GM12878 (cell line): ENCODE measurements at regions of chr4 and their contacts with region 1.

Region 1: DNA sequence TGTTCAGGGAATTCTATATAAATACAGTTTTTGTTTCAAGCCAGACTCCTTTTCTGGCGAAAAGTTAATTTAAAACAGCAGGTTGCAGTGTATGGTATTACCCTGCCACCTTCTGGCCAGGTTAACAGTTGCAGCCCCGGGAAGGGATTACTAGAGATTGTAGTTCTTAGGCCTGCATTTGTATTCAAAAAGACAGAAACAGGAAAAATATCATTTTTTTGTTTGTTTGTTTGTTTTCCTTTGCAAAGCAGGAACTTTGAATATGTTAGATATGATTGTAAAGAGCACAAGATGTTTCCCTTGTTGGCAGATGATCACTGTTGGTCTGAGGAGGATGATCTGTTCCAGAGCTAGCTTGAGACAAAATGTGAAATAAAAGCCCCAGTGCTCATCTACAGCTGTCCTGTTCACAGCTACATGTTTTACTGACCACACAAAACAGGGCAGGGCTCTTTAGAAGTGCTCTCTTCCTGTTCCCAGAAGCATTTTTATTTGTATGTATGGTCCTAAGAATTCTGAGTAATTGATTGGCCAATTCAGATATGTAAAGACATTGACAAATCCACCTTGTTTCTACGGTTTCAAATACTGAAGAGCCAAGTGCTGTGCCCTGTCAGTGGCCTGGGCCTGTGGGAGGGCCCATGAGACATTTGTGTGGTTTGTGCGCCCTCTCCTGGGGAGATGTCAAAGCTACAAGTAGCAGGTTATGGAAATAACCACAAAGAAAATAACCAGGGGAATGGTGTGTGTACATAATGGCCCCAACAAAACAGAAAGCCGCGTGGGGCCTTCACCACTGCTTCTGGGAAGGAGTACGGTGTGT is 57.9 kb downstream of the CLDN22 start:
- DNase-seq: peak; percentile 27
- ATAC-seq: peak; percentile 97
- H3K4me3 ChIP-seq: no peak overlapping the region
- H3K27ac ChIP-seq: no peak overlapping the region
- H3K4me1 ChIP-seq: no peaks in the 10 kb centered on the region
- H3K27me3 ChIP-seq: no peaks in the 10 kb centered on the region; a peak in 1 of 4 replicates
- CTCF ChIP-seq: peak; percentile 80 to 91 (median 87)
- EP300 ChIP-seq: no peak
- POLR2A ChIP-seq: no peak
- RAD21 ChIP-seq: peak; percentile 93

Region 2: GRCh38 chr4:182806259-182807252 is 455.6 kb before region 1 on chr4:
- CTCF ChIA-PET with region 1: no interaction called
- POLR2A ChIA-PET with region 1: no interaction called
- RAD21 ChIA-PET with region 1: no interaction called
- SMC1A ChIA-PET with region 1: interaction called, 3 read pairs
- in situ Hi-C with region 1: no loop called
- intact Hi-C with region 1: loop called (anchors 10 kb)
- DNase-seq: no peak
- ATAC-seq: peak; percentile 76
- H3K4me3 ChIP-seq: peak overlapping the region; percentile 59; the same call in 1 of the 2 replicates
- H3K27ac ChIP-seq: 0 out of 2 replicates have a peak overlapping the region, but pooled peaks have one; percentile 34
- H3K4me1 ChIP-seq: peaks cover 24% of the 10 kb centered on the region
- H3K27me3 ChIP-seq: no peaks in the 10 kb centered on the region
- CTCF ChIP-seq: peak; percentile 73 to 87 (median 84)
- EP300 ChIP-seq: no peak
- POLR2A ChIP-seq: no peak
- RAD21 ChIP-seq: peak; percentile 81

Region 3: GRCh38 chr4:183074296-183074990 is 187.7 kb before region 1 on chr4:
- CTCF ChIA-PET with region 1: interaction called, 42 read pairs
- POLR2A ChIA-PET with region 1: no interaction called
- RAD21 ChIA-PET with region 1: interaction called, 8 read pairs
- SMC1A ChIA-PET with region 1: interaction called, 23 read pairs
- in situ Hi-C with region 1: loop called (anchors 5 kb)
- intact Hi-C with region 1: loop called (anchors 1 kb)
- DNase-seq: no peak
- ATAC-seq: no peak
- H3K4me3 ChIP-seq: no peak overlapping the region
- H3K27ac ChIP-seq: no peak overlapping the region
- H3K4me1 ChIP-seq: no peaks in the 10 kb centered on the region
- H3K27me3 ChIP-seq: no peaks in the 10 kb centered on the region
- CTCF ChIP-seq: no peak
- EP300 ChIP-seq: no peak
- POLR2A ChIP-seq: no peak
- RAD21 ChIP-seq: no peak

Region 4: GRCh38 chr4:183249857-183250256 is 12.3 kb before region 1 on chr4:
- CTCF ChIA-PET with region 1: interaction called, 27 read pairs
- POLR2A ChIA-PET with region 1: no interaction called
- RAD21 ChIA-PET with region 1: interaction called, 5 read pairs
- SMC1A ChIA-PET with region 1: interaction called, 15 read pairs
- in situ Hi-C with region 1: no loop called
- intact Hi-C with region 1: no loop called
- DNase-seq: no peak
- ATAC-seq: peak; percentile 65
- H3K4me3 ChIP-seq: no peak overlapping the region
- H3K27ac ChIP-seq: no peak overlapping the region
- H3K4me1 ChIP-seq: no peaks in the 10 kb centered on the region
- H3K27me3 ChIP-seq: peaks cover 0 to 2% of the 10 kb centered on the region in 2 experiments; a peak in 1 of 4 replicates
- CTCF ChIP-seq: peak in 2 of 3 experiments; percentile 4 to 46; a peak in 2 of 6 replicates
- EP300 ChIP-seq: no peak
- POLR2A ChIP-seq: no peak
- RAD21 ChIP-seq: peak; percentile 55; the same call in 1 of the 2 replicates

Region 5: DNA sequence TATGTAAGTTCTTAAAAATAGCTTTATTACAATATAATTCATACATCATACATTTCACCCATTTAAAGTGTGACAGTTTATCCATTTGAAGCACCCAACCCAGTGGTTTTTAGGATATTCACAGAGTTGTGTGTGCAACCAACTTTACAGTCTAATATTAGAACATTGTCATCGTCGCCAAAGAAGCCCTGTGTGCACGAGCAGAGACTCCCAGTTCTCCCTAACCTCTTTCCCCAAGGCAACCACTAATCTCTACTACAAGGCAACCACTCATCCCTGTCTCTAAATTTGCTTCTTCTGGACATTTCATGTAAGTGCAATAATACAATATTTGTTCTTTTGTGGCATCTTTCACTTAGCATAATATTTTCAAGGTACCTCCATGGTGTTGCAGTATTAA is 10.2 kb after region 1 on chr4:
- CTCF ChIA-PET with region 1: interaction called, 13 read pairs
- POLR2A ChIA-PET with region 1: no interaction called
- RAD21 ChIA-PET with region 1: no interaction called
- SMC1A ChIA-PET with region 1: interaction called, 7 read pairs
- in situ Hi-C with region 1: no loop called
- intact Hi-C with region 1: no loop called
- DNase-seq: no peak
- ATAC-seq: no peak
- H3K4me3 ChIP-seq: no peak overlapping the region
- H3K27ac ChIP-seq: no peak overlapping the region
- H3K4me1 ChIP-seq: no peaks in the 10 kb centered on the region
- H3K27me3 ChIP-seq: no peaks in the 10 kb centered on the region
- CTCF ChIP-seq: no peak
- EP300 ChIP-seq: no peak
- POLR2A ChIP-seq: no peak
- RAD21 ChIP-seq: no peak

Region 6: DNA sequence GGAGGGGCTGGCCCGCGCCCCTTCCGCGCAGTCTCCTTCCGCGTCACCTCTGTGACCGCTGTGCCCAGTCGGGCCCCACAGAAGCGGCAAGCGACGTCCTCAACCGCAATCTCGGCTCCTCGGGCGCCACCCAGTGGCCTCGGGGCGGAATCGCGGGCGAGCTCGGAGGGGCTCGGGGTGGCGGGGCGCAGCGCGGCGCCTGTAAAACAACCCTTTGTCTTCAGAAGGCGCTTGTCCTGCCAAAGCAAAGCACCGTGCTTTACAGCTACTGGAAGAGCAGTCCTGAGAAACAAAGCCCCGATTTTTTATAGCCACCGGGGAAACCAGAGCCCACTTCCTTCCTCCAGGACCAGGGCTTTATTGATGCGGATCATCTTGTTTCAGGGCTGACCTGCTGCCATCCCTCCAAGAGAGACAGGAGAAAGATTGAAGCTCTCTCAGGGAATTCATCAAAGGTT is 145.0 kb after region 1 on chr4:
- CTCF ChIA-PET with region 1: interaction called, 9 read pairs
- POLR2A ChIA-PET with region 1: no interaction called
- RAD21 ChIA-PET with region 1: interaction called, 5 read pairs
- SMC1A ChIA-PET with region 1: interaction called, 4 read pairs
- in situ Hi-C with region 1: no loop called
- intact Hi-C with region 1: loop called (anchors 2 kb)
- DNase-seq: peak; percentile 19
- ATAC-seq: peak; percentile 98
- H3K4me3 ChIP-seq: peak overlapping the region; percentile 64
- H3K27ac ChIP-seq: no peak overlapping the region
- H3K4me1 ChIP-seq: no peaks in the 10 kb centered on the region
- H3K27me3 ChIP-seq: no peaks in the 10 kb centered on the region; a peak in 1 of 4 replicates
- CTCF ChIP-seq: peak; percentile 88 to 94 (median 89)
- EP300 ChIP-seq: no peak
- POLR2A ChIP-seq: no peak
- RAD21 ChIP-seq: peak; percentile 72

Region 7: DNA sequence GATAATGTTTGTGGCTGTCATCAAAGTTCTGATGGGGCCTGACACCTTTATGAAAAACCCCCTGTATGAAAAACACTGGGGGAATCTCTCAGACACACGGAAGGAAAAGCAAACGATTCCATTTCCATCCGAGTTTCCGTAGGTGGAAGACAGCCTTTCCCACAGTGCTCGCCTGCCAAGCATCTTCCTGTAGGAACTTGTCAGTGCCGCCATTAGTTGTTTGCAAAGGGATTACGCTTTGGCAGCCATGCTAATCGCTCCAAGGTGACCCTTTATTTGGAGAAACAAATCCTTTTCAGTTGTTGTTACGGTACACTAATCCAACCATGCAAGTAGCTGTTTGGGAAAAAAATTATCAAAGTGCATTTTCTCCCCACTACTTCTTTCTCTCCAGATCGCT is 598.6 kb after region 1 on chr4:
- CTCF ChIA-PET with region 1: no interaction called
- POLR2A ChIA-PET with region 1: no interaction called
- RAD21 ChIA-PET with region 1: no interaction called
- SMC1A ChIA-PET with region 1: no interaction called
- in situ Hi-C with region 1: no loop called
- intact Hi-C with region 1: no loop called
- DNase-seq: no peak
- ATAC-seq: no peak
- H3K4me3 ChIP-seq: no peak overlapping the region
- H3K27ac ChIP-seq: no peak overlapping the region
- H3K4me1 ChIP-seq: no peaks in the 10 kb centered on the region
- H3K27me3 ChIP-seq: peaks cover 2% of the 10 kb centered on the region in 2 experiments; a peak in 2 of 4 replicates
- CTCF ChIP-seq: no peak
- EP300 ChIP-seq: no peak
- POLR2A ChIP-seq: no peak
- RAD21 ChIP-seq: no peak